Gastrocnemius medialis (tissue), 4 donors: ENCODE measurements at regions of chr1 and their contacts with region 1.

Region 1: GRCh38 chr1:155063550-155064110 is at the start of gene EFNA4:
- DNase-seq: peak; percentile 69 to 72
- ATAC-seq: peak; percentile 91 to 93
- H3K4me3 ChIP-seq: peak within 1 kb of the TSS; percentile 60 to 91 (median 78)
- H3K27ac ChIP-seq: peak within 1 kb of the TSS; percentile 69 to 80 (median 75)
- H3K4me1 ChIP-seq: peaks cover 9 to 18% of the 10 kb centered on the region in 2 donors
- H3K27me3 ChIP-seq: no peaks in the 10 kb centered on the region
- CTCF ChIP-seq: no peak
- POLR2A ChIP-seq: peak in 1 of 2 donors; percentile 28
- total RNA-seq, gene EFNA4: 0.41 to 0.87 (median 0.80) TPM

Region 2: GRCh38 chr1:155044812-155045690 is 18.6 kb before region 1 on chr1:
- in situ Hi-C with region 1: no loop called
- intact Hi-C with region 1: loop called (anchors 1 kb)
- DNase-seq: peak; percentile 82 to 89
- ATAC-seq: peak; percentile 95 to 98
- H3K4me3 ChIP-seq: no peak overlapping the region
- H3K27ac ChIP-seq: peak overlapping the region; percentile 42 to 74 (median 64)
- H3K4me1 ChIP-seq: peaks cover 15 to 20% of the 10 kb centered on the region in 2 donors
- H3K27me3 ChIP-seq: no peaks in the 10 kb centered on the region
- CTCF ChIP-seq: peak; percentile 77 to 85 (median 82)
- POLR2A ChIP-seq: no peak

Region 3: GRCh38 chr1:155227261-155228095 is 163.8 kb after region 1 on chr1:
- in situ Hi-C with region 1: no loop called
- intact Hi-C with region 1: no loop called
- DNase-seq: peak; percentile 97 to 99
- ATAC-seq: peak; percentile 99 to 100
- H3K4me3 ChIP-seq: peak overlapping the region; percentile 55 to 92 (median 70)
- H3K27ac ChIP-seq: peak overlapping the region; percentile 77 to 83 (median 78)
- H3K4me1 ChIP-seq: peaks cover 8 to 15% of the 10 kb centered on the region in 2 donors
- H3K27me3 ChIP-seq: no peaks in the 10 kb centered on the region
- CTCF ChIP-seq: peak in 1 of 5 experiments; percentile 3
- POLR2A ChIP-seq: peak; percentile 53 to 74